CD8-positive, alpha-beta memory T cell (primary cell): ENCODE measurements at regions of chr6 and their contacts with region 1.

Region 1: DNA sequence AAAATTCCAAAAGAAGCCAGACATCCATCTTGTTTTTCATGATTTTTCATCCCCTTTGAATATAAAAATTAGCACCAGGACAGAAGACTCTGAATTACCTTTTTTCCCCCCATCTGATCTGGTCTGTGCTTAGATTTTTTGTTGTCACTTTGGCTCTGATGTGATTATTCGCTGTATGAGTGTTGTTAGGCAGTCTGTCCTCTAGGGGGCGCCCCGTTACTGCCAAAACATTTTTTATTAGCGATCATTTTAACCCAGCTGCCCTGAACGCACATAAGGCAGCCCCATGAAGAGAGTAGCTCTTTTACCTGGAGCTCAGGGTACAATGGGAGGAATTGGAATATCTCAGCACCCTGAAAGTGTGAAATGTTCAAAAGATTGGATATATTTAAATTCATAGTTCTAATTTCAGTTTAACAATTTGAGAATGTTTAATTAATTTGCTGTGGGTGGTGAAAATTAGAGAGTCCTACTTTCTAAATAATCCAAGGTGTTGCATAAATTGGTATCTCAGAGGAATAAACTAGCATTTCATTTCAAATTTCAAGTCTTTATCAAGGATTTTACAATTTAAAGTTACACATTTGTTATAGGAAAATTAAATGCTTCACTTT is 60.8 kb downstream of the PRPH2 start:
- DNase-seq: peak; percentile 75 to 88 (median 77)
- H3K4me3 ChIP-seq: no peak overlapping the region
- H3K4me3 Mint-ChIP-seq: no peak overlapping the region
- H3K27ac ChIP-seq: no peak overlapping the region
- H3K27ac Mint-ChIP-seq: peak overlapping the region in 5 of 8 donors; percentile 0 to 84 (median 17)
- H3K4me1 ChIP-seq: no peaks in the 10 kb centered on the region
- H3K4me1 Mint-ChIP-seq: peaks cover 0 to 5% (median 0%) of the 10 kb centered on the region in 3 donors
- H3K27me3 ChIP-seq: no peaks in the 10 kb centered on the region
- H3K27me3 Mint-ChIP-seq: no peaks in the 10 kb centered on the region

Region 2: DNA sequence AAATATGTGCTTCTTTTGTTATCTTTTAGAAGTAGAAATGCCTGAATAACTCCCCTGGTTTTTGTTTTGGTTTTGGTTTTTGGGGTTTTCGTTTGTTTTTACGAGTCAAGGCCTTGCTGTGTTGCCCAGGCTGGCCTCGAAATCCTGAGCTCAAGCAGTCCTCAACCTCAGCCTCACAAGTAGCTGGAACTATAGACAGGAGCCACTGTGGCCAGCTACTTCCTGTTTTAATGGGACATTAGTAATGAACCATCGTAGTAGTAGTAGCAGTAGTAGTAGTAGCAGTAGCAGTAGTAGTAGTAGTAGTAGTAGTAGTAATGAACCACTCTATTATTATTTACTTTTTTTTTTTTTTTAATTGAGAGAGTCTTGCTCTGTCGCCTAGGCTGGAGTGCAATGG is 31.8 kb before region 1 on chr6:
- CTCF ChIA-PET with region 1: no interaction called
- POLR2A ChIA-PET with region 1: no interaction called
- DNase-seq: no peak
- H3K4me3 ChIP-seq: no peak overlapping the region
- H3K4me3 Mint-ChIP-seq: peak overlapping the region in 2 of 7 donors; percentile 12 to 23
- H3K27ac ChIP-seq: no peak overlapping the region
- H3K27ac Mint-ChIP-seq: peak overlapping the region in 7 of 8 donors; percentile 57 to 96 (median 90)
- H3K4me1 ChIP-seq: no peaks in the 10 kb centered on the region
- H3K4me1 Mint-ChIP-seq: peaks cover 8 to 21% (median 20%) of the 10 kb centered on the region in 3 donors
- H3K27me3 ChIP-seq: no peaks in the 10 kb centered on the region
- H3K27me3 Mint-ChIP-seq: no peaks in the 10 kb centered on the region

Region 3: DNA sequence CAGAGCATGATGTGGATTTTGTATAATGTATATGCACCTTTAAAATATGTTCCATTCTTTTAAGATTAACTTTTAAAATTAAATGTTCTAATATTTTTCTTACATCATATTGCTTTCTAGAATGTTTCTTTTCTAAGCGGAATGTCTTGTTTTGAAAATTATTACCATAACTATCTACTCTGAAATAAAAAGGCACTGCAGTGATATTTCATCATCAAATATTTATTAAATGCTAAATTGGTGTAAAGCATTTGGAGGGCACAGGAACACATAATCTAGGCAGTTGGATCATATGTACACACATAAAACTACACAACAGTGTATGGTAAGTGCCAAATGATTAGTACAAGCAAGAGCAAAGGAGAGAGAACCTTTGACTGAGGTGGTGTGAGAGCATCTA is 134.0 kb after region 1 on chr6:
- CTCF ChIA-PET with region 1: no interaction called
- POLR2A ChIA-PET with region 1: no interaction called
- DNase-seq: no peak
- H3K4me3 ChIP-seq: no peak overlapping the region
- H3K4me3 Mint-ChIP-seq: no peak overlapping the region
- H3K27ac ChIP-seq: no peak overlapping the region
- H3K27ac Mint-ChIP-seq: peak overlapping the region in 4 of 8 donors; percentile 1 to 74 (median 14)
- H3K4me1 ChIP-seq: peaks cover 8% of the 10 kb centered on the region
- H3K4me1 Mint-ChIP-seq: peaks cover 21 to 50% (median 32%) of the 10 kb centered on the region in 3 donors
- H3K27me3 ChIP-seq: no peaks in the 10 kb centered on the region
- H3K27me3 Mint-ChIP-seq: no peaks in the 10 kb centered on the region

Region 4: DNA sequence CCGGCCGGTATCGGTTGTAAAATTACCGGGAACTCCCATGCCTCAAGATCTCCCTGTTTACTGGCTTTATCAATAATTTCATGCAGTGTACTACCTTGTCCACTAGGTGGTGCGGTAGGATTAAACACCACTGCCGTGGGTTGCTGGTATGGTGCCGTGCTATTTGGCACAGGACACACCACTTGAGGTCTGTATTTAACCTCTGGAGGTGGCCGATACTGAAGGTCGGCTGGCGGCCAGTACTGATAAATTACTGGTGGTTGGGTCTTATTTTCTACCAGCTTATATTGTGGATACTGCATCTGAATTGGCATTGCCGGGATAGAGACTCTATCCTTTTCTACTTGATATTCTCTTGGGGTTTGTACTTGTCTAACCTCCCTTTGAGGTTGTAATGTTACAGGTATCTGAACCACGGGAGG is 239.9 kb after region 1 on chr6:
- CTCF ChIA-PET with region 1: interaction called, 16 read pairs
- POLR2A ChIA-PET with region 1: no interaction called
- DNase-seq: peak; percentile 31 to 80 (median 72)
- H3K4me3 ChIP-seq: no peak overlapping the region
- H3K4me3 Mint-ChIP-seq: no peak overlapping the region
- H3K27ac ChIP-seq: no peak overlapping the region
- H3K27ac Mint-ChIP-seq: no peak overlapping the region
- H3K4me1 ChIP-seq: no peaks in the 10 kb centered on the region
- H3K4me1 Mint-ChIP-seq: peaks cover 8 to 14% (median 10%) of the 10 kb centered on the region in 3 donors
- H3K27me3 ChIP-seq: no peaks in the 10 kb centered on the region
- H3K27me3 Mint-ChIP-seq: peaks cover 0 to 1% of the 10 kb centered on the region in 2 donors